Mucosa of descending colon (tissue), 3 donors: ENCODE measurements at regions of chr1 and their contacts with region 1.

Region 1: GRCh38 chr1:100459358-100460114 is 78.4 kb upstream of the GPR88 start:
- DNase-seq: peak; percentile 58 to 83 (median 82)
- ATAC-seq: peak; percentile 93
- H3K4me3 ChIP-seq: no peak overlapping the region
- H3K4me1 ChIP-seq: peaks cover 4% of the 10 kb centered on the region
- CTCF ChIP-seq: peak; percentile 59

Region 2: GRCh38 chr1:99808391-99809115 is 651.0 kb before region 1 on chr1:
- intact Hi-C with region 1: loop called in 1 of 2 experiments (anchors 10 kb)
- DNase-seq: peak in 1 of 3 donors; percentile 66
- ATAC-seq: peak; percentile 94
- H3K4me3 ChIP-seq: no peak overlapping the region
- H3K4me1 ChIP-seq: no peaks in the 10 kb centered on the region
- CTCF ChIP-seq: peak; percentile 32